ENCODE measurements at regions of chr17 and their contacts with region 1.

Region 1: GRCh38 chr17:5706577-5707216 is 122.4 kb upstream of the NLRP1 start:
- DNase-seq: peak; percentile 74
- H3K4me3 ChIP-seq: no peak overlapping the region
- H3K27ac ChIP-seq: no peak overlapping the region
- H3K4me1 ChIP-seq: no peaks in the 10 kb centered on the region
- H3K27me3 ChIP-seq: peaks cover 2% of the 10 kb centered on the region

Region 2: GRCh38 chr17:5598457-5598856 is 108.2 kb before region 1 on chr17:
- in situ Hi-C with region 1: no loop called
- DNase-seq: no peak
- H3K4me3 ChIP-seq: no peak overlapping the region
- H3K27ac ChIP-seq: no peak overlapping the region
- H3K4me1 ChIP-seq: no peaks in the 10 kb centered on the region
- H3K27me3 ChIP-seq: peaks cover 52% of the 10 kb centered on the region

Region 3: GRCh38 chr17:5820721-5821456 is 114.2 kb after region 1 on chr17:
- in situ Hi-C with region 1: no loop called
- DNase-seq: no peak
- H3K4me3 ChIP-seq: no peak overlapping the region
- H3K27ac ChIP-seq: no peak overlapping the region
- H3K4me1 ChIP-seq: no peaks in the 10 kb centered on the region
- H3K27me3 ChIP-seq: no peaks in the 10 kb centered on the region

Region 4: GRCh38 chr17:6421700-6422604 is 715.3 kb after region 1 on chr17:
- in situ Hi-C with region 1: loop called (anchors 25 kb)
- DNase-seq: peak; percentile 83
- H3K4me3 ChIP-seq: no peak overlapping the region
- H3K27ac ChIP-seq: no peak overlapping the region
- H3K4me1 ChIP-seq: no peaks in the 10 kb centered on the region
- H3K27me3 ChIP-seq: no peaks in the 10 kb centered on the region

Measured in GM23248 (cell line).